ENCODE measurements at regions of chr5 and their contacts with region 1.

Region 1: GRCh38 chr5:60687927-60688720 is 11.8 kb downstream of the DEPDC1B start:
- DNase-seq: peak; percentile 85
- ATAC-seq: peak; percentile 100
- H3K4me3 ChIP-seq: peak overlapping the region in 1 of 3 experiments; percentile 7; a peak in 1 of 6 replicates
- H3K27ac ChIP-seq: peak overlapping the region; percentile 53
- H3K4me1 ChIP-seq: peaks cover 32% of the 10 kb centered on the region
- H3K27me3 ChIP-seq: no peaks in the 10 kb centered on the region
- CTCF ChIP-seq: peak; percentile 35; the same call in 1 of the 2 replicates
- EP300 ChIP-seq: peak in 1 of 2 experiments; percentile 19; a peak in 1 of 4 replicates
- POLR2A ChIP-seq: no peak
- RAD21 ChIP-seq: no peak

Region 2: GRCh38 chr5:60810438-60811085 is 122.4 kb after region 1 on chr5:
- CTCF ChIA-PET with region 1: no interaction called
- POLR2A ChIA-PET with region 1: no interaction called
- in situ Hi-C with region 1: loop called (anchors 10 kb)
- intact Hi-C with region 1: no loop called
- DNase-seq: peak; percentile 61
- ATAC-seq: peak; percentile 99
- H3K4me3 ChIP-seq: no peak overlapping the region
- H3K27ac ChIP-seq: no peak overlapping the region
- H3K4me1 ChIP-seq: peaks cover 44% of the 10 kb centered on the region
- H3K27me3 ChIP-seq: no peaks in the 10 kb centered on the region
- CTCF ChIP-seq: no peak
- EP300 ChIP-seq: peak in 1 of 2 experiments; percentile 30; a peak in 1 of 4 replicates
- POLR2A ChIP-seq: no peak
- RAD21 ChIP-seq: no peak

Measured in HepG2 (cell line).